ENCODE measurements at regions of chr12 and their contacts with region 1.

Region 1: DNA sequence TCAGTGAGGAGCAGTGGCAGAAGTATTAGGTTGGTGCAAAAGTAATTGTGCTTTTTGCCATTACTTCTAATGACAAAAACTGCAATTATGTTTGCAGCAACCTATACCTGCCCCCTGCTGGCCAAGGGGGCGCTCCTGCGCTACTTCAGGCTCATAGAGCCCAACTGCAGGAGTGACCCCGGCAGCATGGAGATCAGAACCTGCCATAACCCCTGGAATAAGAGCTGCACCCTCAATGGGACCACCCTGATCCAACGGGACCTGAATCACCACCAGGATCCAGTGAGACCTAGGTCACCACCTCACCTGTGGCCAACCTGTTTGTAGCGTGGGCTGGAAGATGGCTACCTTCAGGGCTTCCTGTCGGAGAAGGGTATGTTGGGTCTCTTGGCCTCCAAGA is 8.2 kb upstream of the C12orf42 start:
- DNase-seq: peak; percentile 45 to 71 (median 65)
- H3K4me3 ChIP-seq: no peak overlapping the region
- H3K27ac ChIP-seq: no peak overlapping the region
- H3K4me1 ChIP-seq: no peaks in the 10 kb centered on the region
- H3K27me3 ChIP-seq: peaks cover 0 to 4% (median 2%) of the 10 kb centered on the region in 5 experiments

Region 2: GRCh38 chr12:103401421-103401820 is 102.6 kb before region 1 on chr12:
- CTCF ChIA-PET with region 1: interaction called, 52 read pairs
- POLR2A ChIA-PET with region 1: no interaction called
- DNase-seq: peak in 2 of 3 donors; percentile 31 to 32
- H3K4me3 ChIP-seq: no peak overlapping the region
- H3K27ac ChIP-seq: no peak overlapping the region
- H3K4me1 ChIP-seq: no peaks in the 10 kb centered on the region
- H3K27me3 ChIP-seq: peaks cover 0 to 6% (median 0%) of the 10 kb centered on the region in 5 experiments

Region 3: DNA sequence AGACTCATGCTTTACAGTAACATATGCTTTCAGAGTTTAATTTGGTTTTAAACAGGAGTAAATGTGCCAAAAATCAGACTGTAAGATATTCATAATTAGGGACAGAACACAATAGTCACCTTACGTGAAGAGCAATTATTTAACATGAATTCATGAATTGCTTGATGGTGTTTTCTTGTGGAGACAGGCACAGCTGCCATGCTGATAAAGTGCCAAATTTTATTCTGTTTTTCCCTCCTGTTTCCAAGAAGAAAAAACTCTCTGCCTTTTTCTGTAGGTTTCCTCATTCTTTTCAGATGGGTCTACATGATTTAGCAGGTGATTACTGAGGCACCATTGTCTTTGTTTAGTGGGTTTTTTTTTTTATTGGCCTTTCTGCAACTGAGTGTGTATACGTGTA is 88.3 kb before region 1 on chr12:
- CTCF ChIA-PET with region 1: no interaction called
- POLR2A ChIA-PET with region 1: no interaction called
- DNase-seq: no peak
- H3K4me3 ChIP-seq: no peak overlapping the region
- H3K27ac ChIP-seq: no peak overlapping the region
- H3K4me1 ChIP-seq: no peaks in the 10 kb centered on the region
- H3K27me3 ChIP-seq: no peaks in the 10 kb centered on the region

Region 4: GRCh38 chr12:103698752-103699560 is 195.0 kb after region 1 on chr12:
- CTCF ChIA-PET with region 1: no interaction called
- POLR2A ChIA-PET with region 1: no interaction called
- DNase-seq: no peak
- H3K4me3 ChIP-seq: no peak overlapping the region
- H3K27ac ChIP-seq: no peak overlapping the region
- H3K4me1 ChIP-seq: no peaks in the 10 kb centered on the region
- H3K27me3 ChIP-seq: peaks cover 0 to 14% (median 0%) of the 10 kb centered on the region in 5 experiments

Measured in common myeloid progenitor, CD34-positive (primary cell).